ENCODE measurements at regions of chr22 and their contacts with region 1.

Region 1: GRCh38 chr22:34414484-34415440 is 494.5 kb upstream of the LARGE1 start:
- DNase-seq: peak; percentile 43
- H3K4me3 ChIP-seq: no peak overlapping the region
- H3K27ac ChIP-seq: no peak overlapping the region
- H3K4me1 ChIP-seq: no peaks in the 10 kb centered on the region
- H3K27me3 ChIP-seq: no peaks in the 10 kb centered on the region
- CTCF ChIP-seq: peak; percentile 29 to 84 (median 60)
- EP300 ChIP-seq: no peak
- POLR2A ChIP-seq: no peak

Region 2: GRCh38 chr22:34301569-34301968 is 113.2 kb before region 1 on chr22:
- in situ Hi-C with region 1: loop called in 1 of 4 experiments (anchors 25 kb)
- intact Hi-C with region 1: no loop called
- DNase-seq: no peak
- H3K4me3 ChIP-seq: no peak overlapping the region
- H3K27ac ChIP-seq: no peak overlapping the region
- H3K4me1 ChIP-seq: no peaks in the 10 kb centered on the region
- H3K27me3 ChIP-seq: no peaks in the 10 kb centered on the region
- CTCF ChIP-seq: no peak
- EP300 ChIP-seq: no peak
- POLR2A ChIP-seq: no peak

Region 3: DNA sequence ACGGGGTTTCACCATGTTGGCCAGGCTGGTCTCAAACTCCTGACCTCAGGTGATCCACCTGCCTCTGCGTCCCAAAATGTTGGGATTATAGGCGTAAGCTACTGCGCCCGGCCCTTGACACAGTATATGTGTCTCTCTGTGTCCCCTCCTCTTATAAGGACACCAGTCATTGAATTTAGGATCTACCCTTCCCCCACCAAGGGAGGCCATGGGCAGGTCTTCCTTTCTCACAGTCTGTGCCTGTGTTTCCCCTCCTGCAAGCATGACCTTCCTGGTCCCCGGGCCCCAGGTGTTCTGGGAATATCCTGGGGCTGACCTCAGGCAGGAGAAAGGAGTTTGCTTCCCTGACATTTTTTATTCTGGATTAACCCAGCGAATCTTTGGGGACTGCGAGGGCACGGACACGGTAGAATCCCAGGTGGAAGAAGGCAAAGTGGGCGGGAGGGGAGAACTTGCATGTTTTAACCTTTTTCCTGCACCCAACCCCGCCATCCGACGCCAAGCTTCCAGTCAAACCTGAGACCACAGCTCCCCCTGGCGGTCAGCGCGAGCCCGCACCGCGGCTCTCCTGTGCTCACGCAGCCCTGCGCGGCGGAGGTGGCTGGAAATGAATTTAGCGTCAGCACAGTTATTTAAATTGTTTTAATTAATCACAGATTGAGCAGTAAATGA is 609.1 kb after region 1 on chr22:
- in situ Hi-C with region 1: loop called in 2 of 4 experiments (anchors 25 kb)
- intact Hi-C with region 1: no loop called
- DNase-seq: peak; percentile 78
- H3K4me3 ChIP-seq: no peak overlapping the region
- H3K27ac ChIP-seq: no peak overlapping the region
- H3K4me1 ChIP-seq: peaks cover 2 to 17% (median 9%) of the 10 kb centered on the region in 4 donors
- H3K27me3 ChIP-seq: peaks cover 14% of the 10 kb centered on the region
- CTCF ChIP-seq: peak; percentile 75 to 88 (median 84)
- EP300 ChIP-seq: no peak
- POLR2A ChIP-seq: no peak

Region 4: DNA sequence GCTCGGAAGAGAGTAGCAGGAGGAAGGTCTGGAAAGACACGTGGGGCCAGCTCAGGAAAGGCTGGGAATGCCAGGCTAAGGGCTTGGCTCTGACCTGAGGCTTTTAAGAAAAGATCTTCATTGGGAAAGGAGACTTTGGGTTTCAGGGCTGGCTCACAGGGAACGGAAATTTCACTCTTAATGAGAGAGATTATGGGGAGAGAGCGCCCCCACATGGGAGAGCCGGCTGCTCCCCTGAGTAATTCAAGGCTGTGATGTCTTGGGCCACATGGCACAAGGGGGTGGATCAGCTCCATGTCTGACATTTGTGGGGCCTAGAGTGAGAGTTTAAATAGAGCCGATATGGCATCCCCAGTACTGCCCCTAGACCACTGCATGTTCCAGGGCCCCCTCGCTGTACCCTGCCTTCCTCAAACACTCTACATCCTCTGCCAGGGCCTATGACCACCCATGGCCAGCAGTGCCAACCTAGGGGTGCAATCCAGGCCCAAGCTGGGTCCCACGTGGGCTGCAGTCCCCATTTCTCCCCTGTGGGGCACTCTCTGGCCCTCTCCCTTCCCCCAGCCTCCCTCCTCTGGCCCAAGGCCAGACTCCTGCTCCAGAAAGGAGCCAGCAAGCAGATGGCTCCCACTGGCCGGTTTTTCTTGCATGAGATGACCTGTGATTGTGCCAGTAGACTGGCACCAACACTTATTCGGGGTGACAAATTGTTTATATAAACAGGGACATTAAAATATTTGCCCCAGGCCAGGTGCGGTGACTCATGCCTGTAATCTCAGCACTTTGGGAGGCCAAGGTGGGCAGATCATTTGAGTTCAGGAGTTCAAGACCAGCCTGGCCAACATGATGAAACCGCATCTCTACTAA is 726.4 kb after region 1 on chr22:
- in situ Hi-C with region 1: loop called in 2 of 4 experiments (anchors 10 kb)
- intact Hi-C with region 1: no loop called
- DNase-seq: peak; percentile 79
- H3K4me3 ChIP-seq: no peak overlapping the region
- H3K27ac ChIP-seq: no peak overlapping the region
- H3K4me1 ChIP-seq: peaks cover 0 to 5% (median 0%) of the 10 kb centered on the region in 4 donors
- H3K27me3 ChIP-seq: no peaks in the 10 kb centered on the region
- CTCF ChIP-seq: peak; percentile 26 to 68 (median 51)
- EP300 ChIP-seq: no peak
- POLR2A ChIP-seq: no peak

Region 5: DNA sequence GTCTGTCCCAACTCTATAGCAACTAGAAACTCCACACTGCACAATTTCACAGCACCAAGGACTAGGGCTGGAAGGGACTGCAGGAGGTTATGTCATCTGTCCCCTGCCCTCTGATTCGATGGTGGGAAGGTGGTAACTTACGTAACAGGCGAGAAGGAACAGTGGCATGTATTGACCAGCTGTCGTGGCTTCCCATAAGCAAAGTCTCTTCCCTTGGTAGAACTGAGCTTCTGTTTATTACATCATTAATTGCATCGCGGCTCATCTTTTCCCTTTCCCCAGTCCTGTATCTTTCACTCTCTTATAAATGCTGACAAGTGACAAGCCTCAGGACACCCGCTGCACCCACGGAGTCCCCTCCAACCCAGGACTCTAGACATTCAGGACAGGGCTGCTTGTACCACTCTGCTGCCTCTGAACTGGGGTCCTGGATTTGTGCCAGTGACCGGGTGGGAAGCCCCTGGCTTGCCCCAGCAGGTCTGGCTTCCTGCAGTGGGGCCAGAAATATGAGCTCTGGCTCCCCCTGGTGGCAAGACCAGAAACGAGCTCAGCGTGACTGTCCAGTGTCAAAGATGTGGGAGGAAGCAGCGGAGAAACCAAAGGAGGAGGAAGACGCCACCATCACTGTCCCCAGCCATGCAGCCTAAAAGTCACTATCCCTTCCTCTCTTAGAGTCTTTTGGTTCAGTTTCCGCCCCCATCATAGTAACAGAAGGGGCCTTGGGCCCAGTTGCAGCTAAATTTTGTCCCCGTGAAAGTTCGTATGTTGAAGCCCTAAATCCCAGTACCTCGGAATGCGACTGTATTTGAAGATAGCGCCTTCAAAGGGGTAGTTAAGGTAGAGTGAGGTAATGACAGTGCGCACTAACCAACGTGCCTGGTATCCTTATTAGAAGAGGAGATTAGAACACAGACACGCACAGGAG is 735.7 kb after region 1 on chr22:
- in situ Hi-C with region 1: loop called (anchors 10 to 25 kb)
- intact Hi-C with region 1: no loop called
- DNase-seq: peak; percentile 73
- H3K4me3 ChIP-seq: no peak overlapping the region
- H3K27ac ChIP-seq: no peak overlapping the region
- H3K4me1 ChIP-seq: no peaks in the 10 kb centered on the region
- H3K27me3 ChIP-seq: peaks cover 18% of the 10 kb centered on the region
- CTCF ChIP-seq: peak; percentile 67 to 82 (median 78)
- EP300 ChIP-seq: no peak
- POLR2A ChIP-seq: no peak